Endothelial cell of umbilical vein (primary cell): ENCODE measurements at regions of chr9 and their contacts with region 1.

Region 1: GRCh38 chr9:4297151-4297785 is 2.6 kb downstream of the GLIS3 start:
- DNase-seq: peak; percentile 78
- H3K4me3 ChIP-seq: peak overlapping the region; percentile 53 to 77 (median 75)
- H3K27ac ChIP-seq: peak overlapping the region; percentile 85
- H3K4me1 ChIP-seq: peaks cover 35% of the 10 kb centered on the region
- H3K27me3 ChIP-seq: no peaks in the 10 kb centered on the region
- CTCF ChIP-seq: peak in 1 of 2 donors; percentile 62
- POLR2A ChIP-seq: no peak

Region 2: DNA sequence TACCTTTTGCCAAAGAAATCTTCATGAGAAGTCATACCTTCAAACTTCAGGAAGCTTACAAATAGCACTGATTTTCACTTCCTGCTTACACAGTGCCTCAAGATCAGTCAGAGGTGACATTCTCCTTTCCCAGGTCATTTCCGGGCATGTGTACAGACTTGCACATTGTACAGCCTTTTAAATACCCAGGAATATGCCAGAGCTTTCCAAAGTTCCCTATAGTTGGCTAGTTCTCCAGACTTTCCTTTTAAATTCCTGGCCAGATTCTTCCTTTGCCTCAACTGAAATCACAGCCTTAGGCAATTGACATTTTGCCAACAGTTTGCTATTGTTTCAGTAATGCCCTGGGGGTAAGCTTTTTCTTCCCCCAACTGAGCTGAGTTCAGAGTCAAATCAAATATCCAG is 818.7 kb before region 1 on chr9:
- CTCF ChIA-PET with region 1: no interaction called
- POLR2A ChIA-PET with region 1: no interaction called
- dilution Hi-C with region 1: no loop called
- intact Hi-C with region 1: loop called (anchors 5 kb)
- DNase-seq: peak; percentile 76
- H3K4me3 ChIP-seq: no peak overlapping the region
- H3K27ac ChIP-seq: peak overlapping the region; percentile 83
- H3K4me1 ChIP-seq: peaks cover 58% of the 10 kb centered on the region
- H3K27me3 ChIP-seq: no peaks in the 10 kb centered on the region
- CTCF ChIP-seq: no peak
- POLR2A ChIP-seq: no peak

Region 3: DNA sequence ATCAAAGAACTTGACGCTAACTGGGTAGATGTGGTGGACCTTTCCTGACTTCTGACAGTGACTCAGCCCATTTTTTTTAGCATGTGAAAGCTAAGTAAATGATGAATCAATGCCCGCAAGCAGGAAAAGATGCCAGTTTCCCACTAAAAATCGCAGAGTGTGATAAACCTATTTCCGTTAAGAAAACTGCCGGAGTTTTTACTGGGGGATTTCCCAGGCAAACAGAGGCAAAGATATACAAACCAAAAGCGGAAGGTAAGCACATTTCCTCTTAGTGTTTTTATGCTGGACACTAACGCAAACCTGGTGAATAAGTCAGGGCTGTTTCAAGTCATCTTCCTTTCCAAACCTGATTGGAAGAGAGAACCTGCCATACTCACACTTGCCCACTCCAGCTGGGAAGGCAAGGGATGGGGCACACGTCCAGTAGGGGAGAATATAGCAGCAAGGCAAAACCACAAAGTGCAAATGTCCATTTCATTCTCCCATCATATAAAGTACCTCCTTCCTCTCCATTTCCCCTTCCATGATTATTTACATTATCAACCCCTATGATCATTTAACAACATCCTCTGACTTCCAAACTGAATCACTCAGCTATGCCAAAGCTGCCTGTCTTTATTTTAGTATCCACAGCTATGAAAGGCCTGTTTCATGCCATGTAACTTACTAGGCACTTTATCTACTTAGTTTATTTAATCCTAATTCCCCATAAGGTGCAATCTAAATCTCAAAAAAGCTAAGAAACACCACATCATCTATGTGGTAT is 421.7 kb before region 1 on chr9:
- CTCF ChIA-PET with region 1: interaction called, 3 read pairs
- POLR2A ChIA-PET with region 1: no interaction called
- dilution Hi-C with region 1: no loop called
- intact Hi-C with region 1: loop called (anchors 1 kb)
- DNase-seq: peak; percentile 92
- H3K4me3 ChIP-seq: no peak overlapping the region
- H3K27ac ChIP-seq: peak overlapping the region; percentile 56
- H3K4me1 ChIP-seq: peaks cover 23% of the 10 kb centered on the region
- H3K27me3 ChIP-seq: peaks cover 14 to 19% of the 10 kb centered on the region in 2 experiments
- CTCF ChIP-seq: no peak
- POLR2A ChIP-seq: peak; percentile 38

Region 4: GRCh38 chr9:4058931-4059330 is 238.3 kb before region 1 on chr9:
- CTCF ChIA-PET with region 1: no interaction called
- POLR2A ChIA-PET with region 1: no interaction called
- dilution Hi-C with region 1: no loop called
- intact Hi-C with region 1: no loop called
- DNase-seq: no peak
- H3K4me3 ChIP-seq: no peak overlapping the region
- H3K27ac ChIP-seq: no peak overlapping the region
- H3K4me1 ChIP-seq: no peaks in the 10 kb centered on the region
- H3K27me3 ChIP-seq: no peaks in the 10 kb centered on the region
- CTCF ChIP-seq: no peak
- POLR2A ChIP-seq: no peak

Region 5: DNA sequence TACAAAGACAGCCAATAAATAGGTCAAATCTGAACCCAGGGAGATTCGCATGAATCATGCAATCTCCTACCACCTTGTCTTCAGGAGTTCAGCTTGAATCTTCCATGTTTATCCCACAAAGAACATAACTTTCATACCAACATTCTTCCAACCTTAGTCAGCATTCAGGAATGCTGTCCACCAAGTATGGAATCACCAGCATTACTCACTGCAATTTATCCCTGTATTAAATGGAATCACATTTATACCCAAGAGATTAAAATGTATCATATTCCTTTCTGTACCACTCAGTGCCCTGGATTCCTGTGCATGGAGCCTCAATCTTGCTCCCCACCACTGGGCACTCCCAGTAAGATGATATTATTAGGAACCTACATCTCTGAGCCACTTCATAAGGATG is 160.0 kb before region 1 on chr9:
- CTCF ChIA-PET with region 1: no interaction called
- POLR2A ChIA-PET with region 1: no interaction called
- dilution Hi-C with region 1: no loop called
- intact Hi-C with region 1: loop called (anchors 1 kb)
- DNase-seq: peak; percentile 88
- H3K4me3 ChIP-seq: no peak overlapping the region
- H3K27ac ChIP-seq: peak overlapping the region; percentile 55
- H3K4me1 ChIP-seq: peaks cover 22% of the 10 kb centered on the region
- H3K27me3 ChIP-seq: no peaks in the 10 kb centered on the region
- CTCF ChIP-seq: no peak
- POLR2A ChIP-seq: no peak

Region 6: GRCh38 chr9:4277531-4277991 is 19.7 kb before region 1 on chr9:
- CTCF ChIA-PET with region 1: no interaction called
- POLR2A ChIA-PET with region 1: no interaction called
- dilution Hi-C with region 1: no loop called
- intact Hi-C with region 1: loop called (anchors 2 kb)
- DNase-seq: peak; percentile 80
- H3K4me3 ChIP-seq: no peak overlapping the region
- H3K27ac ChIP-seq: peak overlapping the region; percentile 1
- H3K4me1 ChIP-seq: peaks cover 6% of the 10 kb centered on the region
- H3K27me3 ChIP-seq: no peaks in the 10 kb centered on the region
- CTCF ChIP-seq: no peak
- POLR2A ChIP-seq: no peak

Region 7: GRCh38 chr9:4366591-4367330 is 69.5 kb after region 1 on chr9:
- CTCF ChIA-PET with region 1: interaction called, 5 read pairs
- POLR2A ChIA-PET with region 1: no interaction called
- dilution Hi-C with region 1: no loop called
- intact Hi-C with region 1: loop called (anchors 1 kb)
- DNase-seq: peak; percentile 53
- H3K4me3 ChIP-seq: no peak overlapping the region
- H3K27ac ChIP-seq: no peak overlapping the region
- H3K4me1 ChIP-seq: no peaks in the 10 kb centered on the region
- H3K27me3 ChIP-seq: peaks cover 2 to 5% of the 10 kb centered on the region in 2 experiments
- CTCF ChIP-seq: peak; percentile 74 to 81
- POLR2A ChIP-seq: no peak

Region 8: GRCh38 chr9:4464911-4465513 is 167.7 kb after region 1 on chr9:
- CTCF ChIA-PET with region 1: no interaction called
- POLR2A ChIA-PET with region 1: no interaction called
- dilution Hi-C with region 1: no loop called
- intact Hi-C with region 1: no loop called
- DNase-seq: no peak
- H3K4me3 ChIP-seq: no peak overlapping the region
- H3K27ac ChIP-seq: no peak overlapping the region
- H3K4me1 ChIP-seq: no peaks in the 10 kb centered on the region
- H3K27me3 ChIP-seq: peaks cover 0 to 2% of the 10 kb centered on the region in 2 experiments
- CTCF ChIP-seq: no peak
- POLR2A ChIP-seq: no peak